ENCODE measurements at regions of chr7 and their contacts with region 1.

Region 1: DNA sequence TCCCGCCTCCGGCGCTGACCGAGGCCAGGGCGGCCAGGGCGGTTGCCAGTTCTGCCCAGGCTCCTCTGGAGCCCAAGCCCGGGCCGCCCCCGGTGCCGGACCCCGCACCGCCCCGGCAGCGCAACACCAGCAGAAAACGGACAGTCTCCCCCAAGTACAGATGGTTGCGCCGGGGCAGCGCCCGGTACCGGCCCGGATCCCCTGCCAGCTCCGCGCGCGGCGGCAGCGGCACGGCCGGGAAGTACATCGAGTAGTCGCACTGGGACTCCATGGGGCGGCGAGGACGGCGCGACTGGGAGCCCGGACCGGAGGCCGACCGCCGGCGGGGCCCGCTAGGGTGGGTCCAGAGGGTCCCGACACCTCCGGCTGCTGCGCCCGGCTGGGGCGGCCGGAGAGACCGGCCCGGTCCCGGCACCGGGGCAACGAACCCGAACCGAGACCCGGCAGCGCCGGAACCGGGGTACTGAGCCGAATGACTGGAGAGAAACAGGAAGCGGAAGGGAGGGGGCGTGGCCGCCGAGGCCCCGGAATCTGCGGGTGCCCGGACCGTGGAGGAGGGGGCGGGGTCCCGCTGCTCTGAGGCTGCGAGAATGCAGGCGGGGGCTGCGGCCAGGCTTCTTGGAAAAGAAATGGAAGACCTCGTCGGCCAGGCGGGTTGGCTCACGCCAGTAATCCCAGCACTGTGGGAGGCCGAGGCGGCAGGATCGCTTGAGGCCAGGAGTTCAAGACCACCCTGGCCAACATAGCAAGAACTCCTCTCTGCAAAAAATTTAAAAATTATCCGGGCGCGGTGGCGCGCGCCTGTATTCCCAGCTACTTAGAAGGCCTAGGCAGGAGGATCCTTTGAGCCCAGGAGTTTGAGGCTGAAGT is at the start of gene TRAPPC14:
- DNase-seq: peak; percentile 86 to 93 (median 87)
- H3K4me3 ChIP-seq: peak within 1 kb of the TSS; percentile 52 to 74
- H3K4me3 Mint-ChIP-seq: peak within 1 kb of the TSS; percentile 86 to 90 (median 88)
- H3K27ac ChIP-seq: peak within 1 kb of the TSS; percentile 80
- H3K27ac Mint-ChIP-seq: peak within 1 kb of the TSS; percentile 86 to 96 (median 92)
- H3K4me1 ChIP-seq: peaks cover 49% of the 10 kb centered on the region
- H3K4me1 Mint-ChIP-seq: peaks cover 25 to 79% (median 44%) of the 10 kb centered on the region in 4 donors
- H3K27me3 ChIP-seq: no peaks in the 10 kb centered on the region
- H3K27me3 Mint-ChIP-seq: no peaks in the 10 kb centered on the region
- total RNA-seq, gene TRAPPC14: 68.7 to 73.0 TPM

Region 2: GRCh38 chr7:100171087-100171681 is 12.7 kb after region 1 on chr7:
- CTCF ChIA-PET with region 1: no interaction called
- POLR2A ChIA-PET with region 1: interaction called, 53 read pairs
- intact Hi-C with region 1: loop called (anchors 1 kb)
- DNase-seq: peak in 2 of 5 donors; percentile 32 to 52
- H3K4me3 ChIP-seq: no peak overlapping the region
- H3K4me3 Mint-ChIP-seq: peak overlapping the region; percentile 69 to 87 (median 78)
- H3K27ac ChIP-seq: no peak overlapping the region
- H3K27ac Mint-ChIP-seq: peak overlapping the region in 4 of 7 donors; percentile 7 to 85 (median 64)
- H3K4me1 ChIP-seq: peaks cover 55% of the 10 kb centered on the region
- H3K4me1 Mint-ChIP-seq: peaks cover 39 to 67% (median 50%) of the 10 kb centered on the region in 4 donors
- H3K27me3 ChIP-seq: no peaks in the 10 kb centered on the region
- H3K27me3 Mint-ChIP-seq: peaks cover 2 to 4% of the 10 kb centered on the region in 2 donors

Region 3: DNA sequence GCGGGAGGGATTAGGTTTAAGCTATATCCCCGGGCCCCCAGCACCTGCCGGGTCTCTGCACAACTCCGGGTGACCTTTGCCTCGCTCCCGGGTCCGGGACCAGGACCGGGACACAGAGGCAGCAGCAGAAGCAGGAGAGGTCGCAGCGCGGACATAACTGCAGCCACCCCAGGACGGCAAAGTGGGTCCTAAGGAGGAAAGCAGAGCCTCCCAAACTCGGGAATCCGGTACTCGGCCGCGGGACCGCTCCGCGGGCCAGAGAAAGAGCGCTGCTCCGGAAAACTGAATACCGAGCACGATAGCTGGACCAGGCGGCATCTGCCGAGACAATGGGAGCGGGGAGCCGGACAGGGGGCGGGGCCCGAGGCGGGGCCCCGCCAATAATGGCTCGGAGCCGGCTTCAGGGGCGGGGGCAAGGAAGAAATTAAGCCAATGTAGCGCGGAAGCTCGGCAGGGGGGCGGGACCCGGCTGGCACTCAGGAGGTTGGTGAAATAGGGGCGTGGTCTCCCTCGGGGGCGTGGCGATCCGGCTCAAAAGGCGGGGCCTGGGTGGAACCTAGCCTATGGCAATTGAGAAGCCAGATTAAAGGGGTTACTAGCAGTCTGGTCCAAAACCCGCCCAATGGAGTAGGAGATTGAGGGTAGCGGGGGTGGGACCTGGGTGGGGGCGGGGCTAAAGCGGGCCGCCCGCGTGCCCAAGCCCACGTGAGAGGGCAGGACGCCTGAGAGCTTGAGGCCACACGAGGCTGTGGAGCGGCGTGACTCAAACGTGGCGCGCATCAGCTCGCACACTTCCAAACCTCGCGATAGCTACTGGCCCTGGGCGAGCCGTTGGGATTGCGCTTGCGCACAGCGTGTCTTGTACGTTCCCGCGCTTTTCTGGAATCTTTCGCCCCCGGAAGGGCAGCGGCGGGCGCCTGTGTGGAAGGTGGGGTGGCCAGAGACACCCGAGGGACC is 18.9 kb after region 1 on chr7 and contains the starts of genes GPC2 and STAG3:
- CTCF ChIA-PET with region 1: interaction called, 3 read pairs
- POLR2A ChIA-PET with region 1: interaction called, 30 read pairs
- intact Hi-C with region 1: loop called (anchors 1 kb)
- DNase-seq: peak; percentile 96 to 97 (median 97)
- H3K4me3 ChIP-seq: peak within 1 kb of the TSS; percentile 36 to 41
- H3K4me3 Mint-ChIP-seq: peak within 1 kb of the TSS; percentile 66 to 83 (median 80)
- H3K27ac ChIP-seq: peak within 1 kb of the TSS; percentile 35
- H3K27ac Mint-ChIP-seq: peak within 1 kb of the TSS; percentile 62 to 91 (median 76)
- H3K4me1 ChIP-seq: peaks cover 30% of the 10 kb centered on the region
- H3K4me1 Mint-ChIP-seq: peaks cover 22 to 50% (median 34%) of the 10 kb centered on the region in 4 donors
- H3K27me3 ChIP-seq: no peaks in the 10 kb centered on the region
- H3K27me3 Mint-ChIP-seq: no peaks in the 10 kb centered on the region
- total RNA-seq, gene GPC2: 11.8 to 12.5 TPM
- total RNA-seq, gene STAG3: 6.5 to 7.7 TPM